Activated T-helper 2 cell treated with anti-CD3 and anti-CD28 coated beads, Interferon-gamma antibody, Interleukin-2, Interleukin-4, amounts not matched to agents 10 μg/mL and 5 μg/mL and 100 μg/mL, durations not matched to agents 14 hours and 24 hours and 36 hours (primary cell): ENCODE measurements at regions of chr5 and their contacts with region 1.

Region 1: DNA sequence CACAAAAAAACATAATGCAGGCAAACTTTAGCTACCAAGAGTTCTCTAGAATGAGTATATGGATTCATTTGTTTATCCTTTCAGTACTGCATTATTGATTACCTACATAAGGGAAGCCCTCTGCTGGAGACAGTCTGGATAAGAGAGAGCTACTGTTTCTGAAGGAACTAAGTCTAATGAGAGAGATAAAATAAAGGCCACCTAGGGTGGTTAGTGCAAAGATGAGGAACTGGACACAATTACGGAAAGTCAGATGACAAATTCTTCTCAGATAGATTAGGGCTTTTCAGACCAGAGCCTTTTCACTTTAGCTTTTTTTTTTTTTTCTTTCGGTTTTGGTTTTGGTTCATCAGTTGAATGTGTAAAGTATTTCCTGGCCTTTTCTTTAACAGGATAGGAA is 31.3 kb downstream of the ISOC1 start:
- DNase-seq: no peak
- H3K4me3 Mint-ChIP-seq: no peak overlapping the region
- H3K27ac Mint-ChIP-seq: peak overlapping the region; percentile 73
- H3K4me1 Mint-ChIP-seq: peaks cover 13% of the 10 kb centered on the region
- H3K27me3 Mint-ChIP-seq: no peaks in the 10 kb centered on the region

Region 2: DNA sequence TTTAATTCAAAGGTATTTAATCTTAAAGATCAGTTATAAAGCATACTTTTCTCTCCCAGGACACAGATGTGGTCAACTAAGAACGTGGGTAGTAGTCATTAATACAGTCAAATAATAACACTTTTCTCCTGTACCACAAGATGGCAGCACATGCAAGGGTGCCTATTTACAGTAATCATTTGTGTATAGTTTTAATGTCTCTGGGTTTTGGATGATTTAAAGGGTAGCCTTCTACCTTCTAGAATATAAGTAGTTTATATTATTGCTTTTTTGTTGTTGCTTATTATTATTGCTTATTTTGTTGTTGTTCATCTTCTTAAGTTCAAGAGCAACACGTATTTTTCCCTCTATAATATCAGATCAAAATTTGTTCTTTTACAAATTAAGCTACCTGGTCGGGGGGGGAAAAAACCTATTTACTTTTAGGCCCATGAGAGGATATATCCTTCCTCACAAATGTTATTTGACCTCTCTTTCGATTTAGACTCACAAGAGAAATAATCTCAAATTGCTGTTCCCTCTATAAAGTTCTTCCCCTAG is 220.2 kb before region 1 on chr5:
- intact Hi-C with region 1: loop called (anchors 5 kb)
- DNase-seq: no peak
- H3K4me3 Mint-ChIP-seq: no peak overlapping the region
- H3K27ac Mint-ChIP-seq: no peak overlapping the region
- H3K4me1 Mint-ChIP-seq: no peaks in the 10 kb centered on the region
- H3K27me3 Mint-ChIP-seq: no peaks in the 10 kb centered on the region

Region 3: GRCh38 chr5:129094087-129094923 is 31.5 kb before region 1 on chr5 and contains the start of gene ISOC1:
- intact Hi-C with region 1: loop called (anchors 2 kb)
- DNase-seq: peak; percentile 90
- H3K4me3 Mint-ChIP-seq: peak within 1 kb of the TSS; percentile 82
- H3K27ac Mint-ChIP-seq: peak within 1 kb of the TSS; percentile 48
- H3K4me1 Mint-ChIP-seq: peaks cover 24% of the 10 kb centered on the region
- H3K27me3 Mint-ChIP-seq: peaks cover 24% of the 10 kb centered on the region
- total RNA-seq, gene ISOC1: 26.6 and 28.1 TPM in 2 replicates

Region 4: GRCh38 chr5:129572060-129572459 is 446.2 kb after region 1 on chr5:
- intact Hi-C with region 1: no loop called
- DNase-seq: no peak
- H3K4me3 Mint-ChIP-seq: no peak overlapping the region
- H3K27ac Mint-ChIP-seq: no peak overlapping the region
- H3K4me1 Mint-ChIP-seq: no peaks in the 10 kb centered on the region
- H3K27me3 Mint-ChIP-seq: no peaks in the 10 kb centered on the region